ENCODE measurements at regions of chr2 and their contacts with region 1.

Region 1: DNA sequence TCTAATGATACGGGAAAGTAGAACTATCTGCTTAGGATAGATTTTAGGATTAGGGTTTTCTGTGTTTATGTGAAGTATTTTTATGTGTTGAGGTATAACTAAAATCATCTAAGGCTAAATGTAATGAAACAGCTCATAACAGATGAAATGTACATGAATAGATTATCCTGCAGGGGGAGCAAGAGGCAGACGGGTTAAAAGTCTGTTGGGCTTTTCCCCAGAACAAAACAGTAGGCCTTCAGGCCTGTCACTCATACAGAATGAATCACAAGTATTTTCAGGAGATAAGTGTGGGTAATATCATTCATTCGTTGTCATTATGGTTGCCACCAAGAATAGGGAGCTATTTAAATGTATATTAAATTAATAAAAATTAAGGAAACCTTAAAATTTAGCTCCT is 107.9 kb upstream of the IL1R2 start:
- DNase-seq: no peak

Region 2: GRCh38 chr2:100485396-100485795 is 1398.5 kb before region 1 on chr2:
- intact Hi-C with region 1: loop called in 1 of 2 experiments (anchors 5 kb)
- DNase-seq: no peak

Region 3: GRCh38 chr2:103525756-103526155 is 1641.9 kb after region 1 on chr2:
- intact Hi-C with region 1: no loop called
- DNase-seq: no peak